Panc1 (cell line): ENCODE measurements at regions of chr11 and their contacts with region 1.

Region 1: DNA sequence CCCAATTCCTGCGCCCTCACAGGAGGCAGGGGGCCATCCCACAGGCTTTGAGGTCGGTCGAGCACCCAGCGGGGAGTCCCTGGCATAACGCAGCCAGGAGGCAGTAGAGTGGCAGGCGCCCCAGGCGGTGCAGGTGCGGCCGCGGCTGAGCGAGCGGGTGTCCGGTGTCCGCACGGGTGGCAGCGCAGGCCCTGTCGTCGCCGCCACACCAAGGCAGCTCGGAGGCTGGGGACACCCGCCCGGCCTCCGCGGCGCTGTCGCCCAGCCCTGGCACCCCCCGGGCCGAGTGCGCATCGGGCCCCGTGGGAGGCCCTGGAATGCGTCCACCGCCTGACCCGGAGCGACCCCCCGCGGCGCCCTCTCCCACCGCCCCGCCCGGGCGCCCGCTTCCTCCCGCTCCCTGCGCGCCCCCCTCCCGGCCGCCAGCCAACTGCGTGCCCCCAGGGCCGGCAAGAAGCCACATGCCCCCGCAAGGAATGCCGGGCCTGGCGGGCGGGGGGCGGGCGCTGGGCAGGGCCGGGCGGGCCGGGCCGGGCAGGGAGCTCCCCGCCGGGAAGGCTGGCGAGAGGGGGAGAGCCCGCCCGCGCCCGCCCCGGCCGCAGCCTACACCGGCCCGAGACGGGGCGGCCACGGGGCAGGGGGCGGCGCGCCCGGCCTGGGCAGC is 33.9 kb downstream of the PRDM11 start:
- DNase-seq: no peak
- ATAC-seq: peak; percentile 92
- H3K4me3 ChIP-seq: peak overlapping the region; percentile 45 to 53
- H3K27ac ChIP-seq: peak overlapping the region; percentile 66; the same call in 1 of the 2 replicates
- H3K4me1 ChIP-seq: peaks cover 15% of the 10 kb centered on the region
- H3K27me3 ChIP-seq: no peaks in the 10 kb centered on the region
- CTCF ChIP-seq: peak; percentile 66

Region 2: GRCh38 chr11:44943118-44943517 is 237.2 kb before region 1 on chr11:
- CTCF ChIA-PET with region 1: no interaction called
- POLR2A ChIA-PET with region 1: no interaction called
- in situ Hi-C with region 1: no loop called
- intact Hi-C with region 1: no loop called
- DNase-seq: no peak
- ATAC-seq: no peak
- H3K4me3 ChIP-seq: no peak overlapping the region
- H3K27ac ChIP-seq: no peak overlapping the region
- H3K4me1 ChIP-seq: peaks cover 57% of the 10 kb centered on the region
- H3K27me3 ChIP-seq: no peaks in the 10 kb centered on the region
- CTCF ChIP-seq: no peak

Region 3: GRCh38 chr11:45193695-45194094 is 13.4 kb after region 1 on chr11:
- CTCF ChIA-PET with region 1: no interaction called
- POLR2A ChIA-PET with region 1: interaction called, 19 read pairs
- in situ Hi-C with region 1: no loop called
- intact Hi-C with region 1: no loop called
- DNase-seq: no peak
- ATAC-seq: no peak
- H3K4me3 ChIP-seq: no peak overlapping the region
- H3K27ac ChIP-seq: no peak overlapping the region
- H3K4me1 ChIP-seq: no peaks in the 10 kb centered on the region
- H3K27me3 ChIP-seq: no peaks in the 10 kb centered on the region
- CTCF ChIP-seq: no peak

Region 4: DNA sequence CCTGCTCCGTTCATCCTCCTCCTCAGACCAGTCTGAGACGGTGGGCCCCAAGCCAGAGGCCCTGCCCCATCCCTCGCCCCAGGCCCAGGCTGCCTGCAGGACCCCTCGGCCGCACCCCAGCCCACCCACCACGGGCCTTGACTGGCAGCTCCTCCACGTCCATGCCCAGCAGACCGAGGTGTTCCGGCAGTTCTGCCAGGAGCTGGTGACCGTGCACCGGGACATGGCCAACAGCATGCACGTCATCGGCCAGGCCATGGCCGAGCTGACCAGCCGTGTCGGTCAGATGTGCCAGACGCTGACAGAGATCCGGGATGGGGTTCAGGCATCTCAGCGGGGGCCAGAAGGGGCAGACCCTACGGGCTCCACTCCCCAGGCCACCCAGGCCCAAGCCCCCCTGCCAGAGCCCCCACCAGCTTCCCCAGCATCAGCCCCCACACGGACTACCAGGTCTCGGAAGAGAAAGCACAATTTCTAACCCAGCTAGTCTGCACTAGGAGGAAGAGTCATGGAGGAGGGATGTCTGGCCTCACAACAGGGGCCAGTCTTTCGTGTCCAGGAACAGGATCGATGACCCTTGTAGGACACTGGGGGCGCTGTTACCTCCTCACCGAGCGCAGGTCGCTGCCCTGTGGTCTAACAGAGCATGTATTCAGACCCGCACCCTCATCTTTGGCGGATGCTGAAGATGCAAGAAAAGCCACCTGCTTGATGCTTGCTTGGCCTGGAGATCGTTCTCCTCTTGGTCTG is 32.4 kb after region 1 on chr11:
- CTCF ChIA-PET with region 1: interaction called, 10 read pairs
- POLR2A ChIA-PET with region 1: no interaction called
- in situ Hi-C with region 1: no loop called
- intact Hi-C with region 1: no loop called
- DNase-seq: no peak
- ATAC-seq: peak; percentile 45; the same call in 1 of the 2 replicates
- H3K4me3 ChIP-seq: no peak overlapping the region
- H3K27ac ChIP-seq: no peak overlapping the region
- H3K4me1 ChIP-seq: no peaks in the 10 kb centered on the region
- H3K27me3 ChIP-seq: no peaks in the 10 kb centered on the region
- CTCF ChIP-seq: peak; percentile 56; the same call in 1 of the 2 replicates

Region 5: GRCh38 chr11:45301537-45302246 is 121.4 kb after region 1 on chr11:
- CTCF ChIA-PET with region 1: no interaction called
- POLR2A ChIA-PET with region 1: no interaction called
- in situ Hi-C with region 1: no loop called
- intact Hi-C with region 1: no loop called
- DNase-seq: no peak
- ATAC-seq: no peak
- H3K4me3 ChIP-seq: no peak overlapping the region
- H3K27ac ChIP-seq: no peak overlapping the region
- H3K4me1 ChIP-seq: no peaks in the 10 kb centered on the region
- H3K27me3 ChIP-seq: peaks cover 6% of the 10 kb centered on the region
- CTCF ChIP-seq: no peak